ENCODE measurements at regions of chr4 and their contacts with region 1.

Region 1: GRCh38 chr4:26860157-26860921 is at the start of gene STIM2:
- DNase-seq: peak; percentile 100
- ATAC-seq: peak; percentile 67
- H3K4me3 Mint-ChIP-seq: peak within 1 kb of the TSS; percentile 100
- H3K27ac Mint-ChIP-seq: peak within 1 kb of the TSS; percentile 100
- H3K4me1 Mint-ChIP-seq: peaks cover 63% of the 10 kb centered on the region
- H3K27me3 Mint-ChIP-seq: no peaks in the 10 kb centered on the region
- CTCF ChIP-seq: no peak
- total RNA-seq, gene STIM2: 48.7 and 59.8 TPM in 2 replicates

Region 2: DNA sequence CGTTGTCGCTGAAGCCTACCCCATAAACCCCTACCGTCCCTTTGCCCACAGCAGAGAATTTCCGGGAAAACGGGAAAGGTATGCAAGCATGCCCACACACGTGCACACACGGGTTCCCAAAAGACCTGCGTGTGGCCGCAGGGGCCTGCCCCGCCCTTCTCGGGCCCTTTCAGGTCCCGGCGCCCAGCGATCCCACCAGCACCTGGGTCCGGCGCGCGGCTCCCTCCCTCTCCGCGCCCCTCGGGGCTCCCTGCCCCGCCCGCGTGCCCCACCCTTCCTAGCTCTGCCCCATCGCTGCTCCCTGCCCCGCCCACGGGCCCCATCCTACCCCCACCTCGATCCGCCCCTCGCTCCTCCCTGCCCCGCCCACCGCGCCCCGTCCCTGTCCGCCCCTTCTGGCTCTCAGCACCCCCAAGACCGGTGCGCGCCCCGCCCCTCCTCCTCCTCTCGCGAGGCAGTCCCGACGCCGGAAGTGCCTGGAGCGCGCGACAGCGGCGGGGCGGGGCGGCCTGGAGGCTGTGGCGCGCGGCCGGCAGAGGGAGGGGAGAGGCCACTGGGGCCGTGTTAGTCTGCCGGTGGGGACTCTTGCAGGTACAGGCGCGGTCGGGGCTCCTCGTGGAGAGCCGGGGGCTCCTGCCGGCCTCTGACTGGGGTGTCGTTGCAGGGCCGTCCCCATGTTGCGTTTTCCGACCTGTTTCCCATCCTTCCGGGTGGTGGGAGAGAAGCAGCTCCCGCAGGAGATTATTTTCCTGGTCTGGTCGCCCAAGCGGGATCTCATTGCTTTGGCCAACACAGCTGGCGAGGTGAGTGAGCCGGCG is 1483.4 kb before region 1 on chr4 and contains the start of gene ANAPC4:
- CTCF ChIA-PET with region 1: no interaction called
- POLR2A ChIA-PET with region 1: no interaction called
- intact Hi-C with region 1: loop called (anchors 2 kb)
- DNase-seq: peak; percentile 95
- ATAC-seq: peak; percentile 94
- H3K4me3 Mint-ChIP-seq: no peak within 1 kb of the TSS
- H3K27ac Mint-ChIP-seq: peak within 1 kb of the TSS; percentile 81
- H3K4me1 Mint-ChIP-seq: peaks cover 5% of the 10 kb centered on the region
- H3K27me3 Mint-ChIP-seq: no peaks in the 10 kb centered on the region
- CTCF ChIP-seq: no peak
- total RNA-seq, gene ANAPC4: 36.8 and 37.0 TPM in 2 replicates

Region 3: DNA sequence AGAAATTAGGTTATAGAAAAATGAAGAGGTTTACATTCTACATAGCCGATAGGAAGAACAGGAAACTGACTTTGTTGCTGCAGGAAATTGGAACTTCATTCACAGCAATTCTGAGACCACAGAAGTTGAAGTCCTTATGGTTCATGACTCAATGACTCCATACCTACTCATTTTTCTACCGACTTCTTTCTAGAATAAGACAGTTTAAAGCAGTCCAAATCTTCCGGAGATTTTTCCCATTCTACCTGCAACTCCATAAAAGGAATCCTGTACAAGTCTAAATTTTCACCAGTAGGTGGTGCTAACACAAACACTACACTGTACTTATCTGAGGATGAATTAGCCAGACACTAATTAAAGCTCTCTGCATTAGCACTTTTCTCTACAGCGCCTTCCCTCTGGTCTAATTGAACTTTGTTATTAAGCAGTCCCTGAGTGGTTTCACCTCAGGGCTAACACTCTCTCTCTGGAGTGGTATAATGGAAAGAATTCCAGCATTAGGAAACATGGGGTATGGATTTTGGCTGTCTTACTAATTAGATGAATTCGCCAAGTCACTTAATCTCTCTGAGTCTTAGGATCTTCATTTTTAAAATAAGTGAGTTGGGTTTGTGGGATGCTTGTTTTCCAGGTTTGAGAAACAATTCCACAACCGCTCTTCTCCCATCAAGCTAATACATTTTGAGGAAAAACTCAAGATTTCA is 778.4 kb before region 1 on chr4:
- CTCF ChIA-PET with region 1: no interaction called
- POLR2A ChIA-PET with region 1: no interaction called
- intact Hi-C with region 1: loop called (anchors 10 kb)
- DNase-seq: no peak
- ATAC-seq: peak; percentile 52
- H3K4me3 Mint-ChIP-seq: no peak overlapping the region
- H3K27ac Mint-ChIP-seq: no peak overlapping the region
- H3K4me1 Mint-ChIP-seq: peaks cover 14% of the 10 kb centered on the region
- H3K27me3 Mint-ChIP-seq: peaks cover 3% of the 10 kb centered on the region
- CTCF ChIP-seq: no peak

Region 4: GRCh38 chr4:26583865-26584652 is 276.3 kb before region 1 on chr4 and contains the start of gene TBC1D19:
- CTCF ChIA-PET with region 1: interaction called, 9 read pairs
- POLR2A ChIA-PET with region 1: interaction called, 38 read pairs
- intact Hi-C with region 1: loop called (anchors 1 kb)
- DNase-seq: peak; percentile 82
- ATAC-seq: peak; percentile 96
- H3K4me3 Mint-ChIP-seq: peak within 1 kb of the TSS; percentile 96
- H3K27ac Mint-ChIP-seq: peak within 1 kb of the TSS; percentile 93
- H3K4me1 Mint-ChIP-seq: peaks cover 24% of the 10 kb centered on the region
- H3K27me3 Mint-ChIP-seq: peaks cover under 1% of the 10 kb centered on the region
- CTCF ChIP-seq: no peak
- total RNA-seq, gene TBC1D19: 5.2 and 6.7 TPM in 2 replicates

Region 5: GRCh38 chr4:26873391-26874026 is 13.2 kb after region 1 on chr4:
- CTCF ChIA-PET with region 1: no interaction called
- POLR2A ChIA-PET with region 1: interaction called, 35 read pairs
- intact Hi-C with region 1: loop called (anchors 1 kb)
- DNase-seq: no peak
- ATAC-seq: peak; percentile 87
- H3K4me3 Mint-ChIP-seq: peak overlapping the region; percentile 64
- H3K27ac Mint-ChIP-seq: peak overlapping the region; percentile 85
- H3K4me1 Mint-ChIP-seq: peaks cover 82% of the 10 kb centered on the region
- H3K27me3 Mint-ChIP-seq: no peaks in the 10 kb centered on the region
- CTCF ChIP-seq: no peak

Region 6: GRCh38 chr4:26936284-26937065 is 76.1 kb after region 1 on chr4:
- CTCF ChIA-PET with region 1: no interaction called
- POLR2A ChIA-PET with region 1: interaction called, 4 read pairs
- intact Hi-C with region 1: loop called (anchors 5 kb)
- DNase-seq: no peak
- ATAC-seq: no peak
- H3K4me3 Mint-ChIP-seq: no peak overlapping the region
- H3K27ac Mint-ChIP-seq: peak overlapping the region; percentile 46
- H3K4me1 Mint-ChIP-seq: peaks cover 68% of the 10 kb centered on the region
- H3K27me3 Mint-ChIP-seq: no peaks in the 10 kb centered on the region
- CTCF ChIP-seq: no peak

Region 7: GRCh38 chr4:27010334-27010940 is 150.1 kb after region 1 on chr4:
- CTCF ChIA-PET with region 1: interaction called, 12 read pairs
- POLR2A ChIA-PET with region 1: interaction called, 9 read pairs
- intact Hi-C with region 1: loop called (anchors 1 kb)
- DNase-seq: peak; percentile 31
- ATAC-seq: peak; percentile 85
- H3K4me3 Mint-ChIP-seq: no peak overlapping the region
- H3K27ac Mint-ChIP-seq: peak overlapping the region; percentile 80
- H3K4me1 Mint-ChIP-seq: peaks cover 5% of the 10 kb centered on the region
- H3K27me3 Mint-ChIP-seq: no peaks in the 10 kb centered on the region
- CTCF ChIP-seq: peak; percentile 95